Activated T-helper 2 cell treated with anti-CD3 and anti-CD28 coated beads, Interferon-gamma antibody, Interleukin-2, Interleukin-4, amounts not matched to agents 10 μg/mL and 5 μg/mL and 100 μg/mL, durations not matched to agents 14 hours and 24 hours and 36 hours (primary cell): ENCODE measurements at regions of chr2 and their contacts with region 1.

Region 1: DNA sequence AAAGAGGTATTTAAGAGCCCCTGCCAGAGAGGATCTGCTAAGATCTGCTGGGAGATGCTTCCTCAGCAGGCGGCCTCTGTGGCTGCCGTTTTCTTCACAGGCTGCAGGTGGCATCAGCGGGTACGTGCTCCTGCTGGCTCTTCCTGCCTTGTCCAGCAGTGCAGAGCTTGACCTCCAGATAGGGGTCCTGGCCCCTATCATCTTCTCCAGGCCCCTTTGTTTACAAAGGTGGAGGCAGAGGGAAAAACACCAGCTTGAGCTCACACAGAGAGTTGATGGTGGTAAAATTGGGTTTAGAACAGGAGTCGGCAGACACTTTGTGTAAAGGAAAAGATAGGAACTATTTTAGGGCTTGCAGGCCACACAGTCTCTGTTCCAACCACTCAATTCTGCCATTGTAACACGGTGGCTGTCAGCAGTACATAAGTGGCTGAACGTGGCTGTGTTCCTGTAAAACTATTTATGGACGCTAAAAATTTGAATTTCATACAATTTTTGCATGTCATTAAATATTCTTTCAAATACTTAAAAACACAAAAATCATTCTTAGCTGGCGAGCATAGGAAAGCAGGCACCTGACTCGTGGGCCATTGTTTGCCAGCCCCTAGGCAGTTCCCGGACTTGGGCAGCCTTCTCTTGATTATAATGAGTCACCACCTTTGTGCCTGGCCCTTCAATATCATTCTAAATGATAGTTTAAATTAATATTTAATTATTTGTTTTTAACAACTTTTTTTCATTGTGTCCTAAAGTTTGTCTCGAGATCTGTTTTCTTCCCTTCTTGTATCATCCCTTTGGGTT is 98.2 kb upstream of the B3GNT7 start:
- DNase-seq: no peak
- H3K4me3 Mint-ChIP-seq: no peak overlapping the region
- H3K27ac Mint-ChIP-seq: no peak overlapping the region
- H3K4me1 Mint-ChIP-seq: no peaks in the 10 kb centered on the region
- H3K27me3 Mint-ChIP-seq: peaks cover 7% of the 10 kb centered on the region

Region 2: GRCh38 chr2:231411831-231412617 is 114.7 kb after region 1 on chr2:
- intact Hi-C with region 1: loop called (anchors 10 kb)
- DNase-seq: peak; percentile 43
- H3K4me3 Mint-ChIP-seq: no peak overlapping the region
- H3K27ac Mint-ChIP-seq: no peak overlapping the region
- H3K4me1 Mint-ChIP-seq: peaks cover 3% of the 10 kb centered on the region
- H3K27me3 Mint-ChIP-seq: peaks cover 34% of the 10 kb centered on the region